MCF 10A (cell line): ENCODE measurements at regions of chr3 and their contacts with region 1.

Region 1: GRCh38 chr3:172476347-172476746 is 28.1 kb upstream of the GHSR start:
- DNase-seq: no peak
- H3K4me3 Mint-ChIP-seq: peak overlapping the region; percentile 90
- H3K27ac Mint-ChIP-seq: no peak overlapping the region
- H3K4me1 Mint-ChIP-seq: no peaks in the 10 kb centered on the region
- H3K27me3 Mint-ChIP-seq: no peaks in the 10 kb centered on the region
- CTCF ChIP-seq: no peak

Region 2: DNA sequence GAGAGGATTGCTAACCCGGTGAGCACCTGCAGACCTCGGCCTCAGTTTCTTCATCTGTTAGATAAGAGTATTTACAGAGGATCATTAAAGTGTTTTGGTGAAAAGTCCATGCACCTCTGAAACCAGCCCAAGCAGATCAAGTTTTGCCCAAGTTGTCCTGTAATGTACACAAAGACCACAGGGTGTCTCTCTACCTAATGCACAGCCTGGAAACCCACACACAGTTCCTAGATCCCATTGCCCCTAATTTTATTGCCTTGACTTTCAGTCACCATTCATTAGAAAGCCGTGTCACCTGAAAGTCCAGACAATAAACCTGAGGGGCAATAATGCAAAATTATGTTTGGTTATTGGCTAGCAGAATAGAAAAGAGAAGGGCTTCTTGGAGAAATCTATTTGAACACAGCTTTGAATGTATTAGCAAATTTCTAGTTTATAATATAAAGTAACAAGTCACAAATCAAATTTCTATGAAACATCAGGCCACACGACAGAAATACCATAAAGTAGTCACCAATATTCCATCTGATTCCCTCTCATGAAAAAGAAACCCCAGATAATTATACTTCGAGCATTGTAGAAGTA is 1288.5 kb before region 1 on chr3:
- CTCF ChIA-PET with region 1: no interaction called
- POLR2A ChIA-PET with region 1: no interaction called
- intact Hi-C with region 1: no loop called
- DNase-seq: peak; percentile 60
- H3K4me3 Mint-ChIP-seq: no peak overlapping the region
- H3K27ac Mint-ChIP-seq: no peak overlapping the region
- H3K4me1 Mint-ChIP-seq: peaks cover 22% of the 10 kb centered on the region
- H3K27me3 Mint-ChIP-seq: no peaks in the 10 kb centered on the region
- CTCF ChIP-seq: peak; percentile 70

Region 3: GRCh38 chr3:171646357-171647133 is 829.8 kb before region 1 on chr3:
- CTCF ChIA-PET with region 1: interaction called, 3 read pairs
- POLR2A ChIA-PET with region 1: no interaction called
- intact Hi-C with region 1: loop called (anchors 2 kb)
- DNase-seq: peak; percentile 55
- H3K4me3 Mint-ChIP-seq: no peak overlapping the region
- H3K27ac Mint-ChIP-seq: no peak overlapping the region
- H3K4me1 Mint-ChIP-seq: no peaks in the 10 kb centered on the region
- H3K27me3 Mint-ChIP-seq: no peaks in the 10 kb centered on the region
- CTCF ChIP-seq: peak; percentile 73

Region 4: DNA sequence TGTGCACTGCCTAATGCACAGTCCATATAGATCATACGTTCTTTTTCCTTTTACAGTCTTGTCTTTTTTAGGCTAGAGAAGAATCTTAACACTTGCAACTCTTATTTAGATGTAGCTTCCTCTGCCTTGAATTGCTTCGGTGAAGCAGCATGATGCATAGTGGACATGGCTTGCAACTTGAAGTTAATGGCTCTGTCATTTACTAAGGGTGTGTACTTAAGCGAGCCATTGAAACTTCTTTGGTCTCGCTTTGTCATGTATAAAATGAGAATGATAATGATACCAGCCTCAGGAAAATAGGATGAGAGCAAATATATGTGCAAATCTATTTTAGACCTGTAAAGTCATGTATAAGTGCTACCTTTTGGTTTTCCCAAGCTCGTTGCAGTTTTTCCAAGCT is 175.5 kb before region 1 on chr3:
- CTCF ChIA-PET with region 1: no interaction called
- POLR2A ChIA-PET with region 1: no interaction called
- intact Hi-C with region 1: no loop called
- DNase-seq: no peak
- H3K4me3 Mint-ChIP-seq: no peak overlapping the region
- H3K27ac Mint-ChIP-seq: no peak overlapping the region
- H3K4me1 Mint-ChIP-seq: peaks cover 17% of the 10 kb centered on the region
- H3K27me3 Mint-ChIP-seq: no peaks in the 10 kb centered on the region
- CTCF ChIP-seq: no peak

Region 5: GRCh38 chr3:172355839-172356238 is 120.5 kb before region 1 on chr3:
- CTCF ChIA-PET with region 1: interaction called, 7 read pairs
- POLR2A ChIA-PET with region 1: no interaction called
- intact Hi-C with region 1: loop called (anchors 5 kb)
- DNase-seq: peak; percentile 85
- H3K4me3 Mint-ChIP-seq: no peak overlapping the region
- H3K27ac Mint-ChIP-seq: peak overlapping the region; percentile 52
- H3K4me1 Mint-ChIP-seq: peaks cover 16% of the 10 kb centered on the region
- H3K27me3 Mint-ChIP-seq: no peaks in the 10 kb centered on the region
- CTCF ChIP-seq: no peak

Region 6: DNA sequence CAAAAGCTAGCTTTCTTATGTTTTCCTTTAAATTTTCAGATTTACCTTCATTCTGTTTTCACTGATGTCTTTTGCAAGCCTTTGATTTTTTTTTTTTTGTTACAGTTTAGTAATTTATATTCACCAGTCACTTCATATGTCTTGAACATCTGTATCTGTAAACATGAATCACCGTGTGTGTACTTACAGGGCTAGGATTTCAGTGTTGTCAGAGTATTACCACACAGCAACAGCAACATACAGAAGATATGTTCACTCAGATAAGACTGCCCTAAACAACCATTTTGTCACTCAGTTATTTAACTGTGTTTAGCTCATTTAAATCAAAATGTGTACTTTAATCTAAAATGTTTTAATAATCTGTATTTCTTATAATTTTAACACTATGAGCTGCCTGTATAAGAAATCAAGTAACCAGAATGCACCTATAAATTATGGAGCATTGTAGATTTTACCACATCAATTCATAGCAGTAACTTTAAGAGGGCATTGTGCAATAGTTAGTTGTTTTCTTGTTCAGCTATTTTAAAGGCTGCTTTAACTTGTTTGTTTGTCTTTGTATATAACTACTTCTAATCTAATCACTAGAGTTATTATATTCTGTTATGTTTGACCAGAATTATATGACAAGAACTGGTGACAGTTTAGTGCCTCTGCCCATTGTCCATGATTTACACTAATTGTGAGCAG is 78.5 kb before region 1 on chr3:
- CTCF ChIA-PET with region 1: interaction called, 4 read pairs
- POLR2A ChIA-PET with region 1: no interaction called
- intact Hi-C with region 1: loop called (anchors 5 kb)
- DNase-seq: peak; percentile 42
- H3K4me3 Mint-ChIP-seq: no peak overlapping the region
- H3K27ac Mint-ChIP-seq: no peak overlapping the region
- H3K4me1 Mint-ChIP-seq: no peaks in the 10 kb centered on the region
- H3K27me3 Mint-ChIP-seq: no peaks in the 10 kb centered on the region
- CTCF ChIP-seq: no peak

Region 7: DNA sequence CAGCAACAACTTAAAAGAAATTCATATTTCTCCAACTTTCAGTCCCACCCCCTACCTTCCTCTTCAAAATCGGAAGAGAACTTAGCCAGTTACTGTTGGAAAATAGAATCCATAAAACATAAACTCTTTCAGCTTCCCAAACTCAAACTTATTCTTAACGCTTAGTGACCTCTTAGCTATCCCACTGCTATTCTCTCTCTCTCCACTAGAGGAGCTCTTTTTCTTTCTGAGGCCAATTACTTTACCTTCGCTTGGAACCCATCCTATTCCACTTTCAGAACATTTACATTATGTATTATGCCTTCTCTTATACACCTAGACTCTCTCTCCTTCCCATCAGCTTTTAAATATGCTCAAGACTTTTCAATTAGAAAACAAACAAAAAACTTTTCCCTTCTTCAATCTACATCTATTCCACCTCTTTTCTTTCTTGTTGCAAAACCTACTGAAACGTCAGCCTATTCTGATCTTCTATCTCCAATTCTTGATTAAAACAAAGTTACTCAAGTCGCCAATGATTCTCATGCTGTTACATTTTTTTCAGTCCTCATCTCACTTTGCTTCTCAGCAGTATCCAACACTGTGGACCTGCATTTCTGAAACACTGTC is 14.7 kb before region 1 on chr3:
- CTCF ChIA-PET with region 1: interaction called, 19 read pairs
- POLR2A ChIA-PET with region 1: interaction called, 4 read pairs
- intact Hi-C with region 1: no loop called
- DNase-seq: peak; percentile 59
- H3K4me3 Mint-ChIP-seq: no peak overlapping the region
- H3K27ac Mint-ChIP-seq: no peak overlapping the region
- H3K4me1 Mint-ChIP-seq: peaks cover under 1% of the 10 kb centered on the region
- H3K27me3 Mint-ChIP-seq: no peaks in the 10 kb centered on the region
- CTCF ChIP-seq: peak; percentile 77

Region 8: GRCh38 chr3:172993412-172993811 is 517.1 kb after region 1 on chr3:
- CTCF ChIA-PET with region 1: no interaction called
- POLR2A ChIA-PET with region 1: no interaction called
- intact Hi-C with region 1: no loop called
- DNase-seq: no peak
- H3K4me3 Mint-ChIP-seq: no peak overlapping the region
- H3K27ac Mint-ChIP-seq: no peak overlapping the region
- H3K4me1 Mint-ChIP-seq: no peaks in the 10 kb centered on the region
- H3K27me3 Mint-ChIP-seq: peaks cover 93% of the 10 kb centered on the region
- CTCF ChIP-seq: no peak